PC-9 (cell line): ENCODE measurements at regions of chr14 and their contacts with region 1.

Region 1: GRCh38 chr14:54253195-54253947 is 143.4 kb upstream of the CDKN3 start:
- DNase-seq: peak; percentile 53 to 94
- H3K4me3 ChIP-seq: no peak overlapping the region
- H3K27ac ChIP-seq: peak overlapping the region; percentile 98
- H3K4me1 ChIP-seq: peaks cover 48% of the 10 kb centered on the region
- H3K27me3 ChIP-seq: no peaks in the 10 kb centered on the region
- CTCF ChIP-seq: no peak

Region 2: DNA sequence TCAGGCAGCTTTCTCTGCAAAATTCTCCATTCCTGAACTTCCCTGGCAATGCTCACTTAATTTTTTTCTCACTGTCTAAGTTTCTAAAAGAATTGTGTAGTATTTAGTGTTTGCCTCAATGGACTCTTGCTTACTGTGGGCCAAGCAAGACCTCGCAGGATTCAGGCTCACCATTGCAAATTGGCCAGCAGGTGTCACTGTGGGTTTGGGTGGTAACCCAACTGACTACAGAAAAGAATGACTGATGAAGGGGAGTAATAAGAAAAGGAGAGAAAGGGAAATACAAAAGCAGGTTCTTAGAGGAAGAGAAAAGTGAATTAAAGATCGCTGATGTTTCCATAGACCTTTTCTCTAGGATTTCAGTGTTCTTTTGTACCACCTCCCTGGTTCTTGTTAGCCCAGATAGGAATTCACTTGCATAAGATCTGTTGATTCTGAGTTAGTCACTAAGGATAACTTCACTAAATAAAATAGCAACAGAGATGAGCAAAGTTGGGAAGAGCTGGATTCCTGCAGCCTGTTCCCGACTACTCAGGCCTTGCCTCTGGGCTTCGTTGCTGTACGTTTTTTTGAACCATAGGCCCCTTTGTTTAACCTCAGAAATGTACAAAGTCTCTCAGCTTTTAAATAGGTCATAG is 713.8 kb before region 1 on chr14:
- CTCF ChIA-PET with region 1: no interaction called
- POLR2A ChIA-PET with region 1: no interaction called
- intact Hi-C with region 1: loop called (anchors 1 kb)
- DNase-seq: peak; percentile 45 to 74
- H3K4me3 ChIP-seq: no peak overlapping the region
- H3K27ac ChIP-seq: no peak overlapping the region
- H3K4me1 ChIP-seq: no peaks in the 10 kb centered on the region
- H3K27me3 ChIP-seq: no peaks in the 10 kb centered on the region
- CTCF ChIP-seq: peak; percentile 88

Region 3: DNA sequence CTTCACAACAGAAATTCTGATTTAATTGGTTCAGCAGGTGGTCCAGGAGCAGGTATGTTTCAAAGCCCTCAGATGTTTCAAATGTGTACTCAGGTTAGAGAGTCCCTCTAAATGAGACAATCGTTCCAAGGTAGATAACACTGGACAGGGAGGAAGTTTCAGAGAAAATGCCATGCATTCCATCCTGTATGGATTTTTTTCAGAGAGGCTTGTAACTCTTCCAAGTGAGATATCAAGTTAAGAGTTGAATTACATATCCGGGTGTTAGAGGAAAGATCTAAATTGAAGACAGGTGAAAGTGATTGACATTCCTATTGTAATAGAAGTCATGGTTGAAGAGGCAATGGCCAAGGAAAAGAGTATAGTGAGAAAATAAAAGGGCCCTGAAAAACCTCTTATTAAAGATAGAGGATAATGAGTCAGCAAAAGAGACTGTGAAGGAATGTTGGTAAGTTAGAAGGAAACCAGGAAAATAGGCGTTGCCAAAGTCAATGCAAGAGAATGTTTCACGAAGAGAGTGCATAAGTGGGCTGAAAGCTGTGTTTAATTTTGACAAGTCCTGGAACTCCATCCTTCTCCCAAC is 402.6 kb before region 1 on chr14:
- CTCF ChIA-PET with region 1: no interaction called
- POLR2A ChIA-PET with region 1: no interaction called
- intact Hi-C with region 1: loop called (anchors 1 kb)
- DNase-seq: peak; percentile 47 to 96
- H3K4me3 ChIP-seq: peak overlapping the region; percentile 26
- H3K27ac ChIP-seq: peak overlapping the region; percentile 88
- H3K4me1 ChIP-seq: peaks cover 38% of the 10 kb centered on the region
- H3K27me3 ChIP-seq: no peaks in the 10 kb centered on the region
- CTCF ChIP-seq: no peak

Region 4: DNA sequence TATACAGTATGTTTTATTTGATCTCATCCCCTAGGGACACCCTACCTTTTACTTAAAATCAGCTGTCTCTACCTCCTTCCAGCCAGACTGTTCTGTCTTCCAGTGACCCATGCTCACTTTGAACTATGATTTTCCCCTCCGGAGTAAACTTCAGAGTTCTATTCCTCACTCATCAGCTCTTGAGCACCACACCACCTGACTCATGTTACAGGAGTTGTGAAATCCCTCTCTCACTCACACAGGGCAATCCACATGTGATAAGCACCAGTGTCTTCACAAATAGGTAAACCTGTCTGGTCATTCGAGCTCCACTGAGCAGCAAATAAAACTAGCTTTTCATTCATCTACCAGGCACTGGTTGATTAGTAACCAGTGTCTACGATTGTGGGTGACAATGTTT is 119.5 kb before region 1 on chr14:
- CTCF ChIA-PET with region 1: no interaction called
- POLR2A ChIA-PET with region 1: no interaction called
- intact Hi-C with region 1: no loop called
- DNase-seq: peak; percentile 17 to 62
- H3K4me3 ChIP-seq: no peak overlapping the region
- H3K27ac ChIP-seq: no peak overlapping the region
- H3K4me1 ChIP-seq: peaks cover 10% of the 10 kb centered on the region
- H3K27me3 ChIP-seq: no peaks in the 10 kb centered on the region
- CTCF ChIP-seq: no peak

Region 5: GRCh38 chr14:54211551-54212308 is 41.6 kb before region 1 on chr14:
- CTCF ChIA-PET with region 1: no interaction called
- POLR2A ChIA-PET with region 1: no interaction called
- intact Hi-C with region 1: loop called (anchors 1 kb)
- DNase-seq: peak; percentile 20 to 70
- H3K4me3 ChIP-seq: no peak overlapping the region
- H3K27ac ChIP-seq: peak overlapping the region; percentile 9
- H3K4me1 ChIP-seq: peaks cover 21% of the 10 kb centered on the region
- H3K27me3 ChIP-seq: no peaks in the 10 kb centered on the region
- CTCF ChIP-seq: no peak

Region 6: GRCh38 chr14:54329082-54329695 is 75.8 kb after region 1 on chr14:
- CTCF ChIA-PET with region 1: interaction called, 30 read pairs
- POLR2A ChIA-PET with region 1: no interaction called
- intact Hi-C with region 1: loop called (anchors 1 kb)
- DNase-seq: peak; percentile 39 to 47
- H3K4me3 ChIP-seq: no peak overlapping the region
- H3K27ac ChIP-seq: no peak overlapping the region
- H3K4me1 ChIP-seq: no peaks in the 10 kb centered on the region
- H3K27me3 ChIP-seq: no peaks in the 10 kb centered on the region
- CTCF ChIP-seq: peak; percentile 49